ENCODE measurements at regions of chr5 and their contacts with region 1.

Region 1: DNA sequence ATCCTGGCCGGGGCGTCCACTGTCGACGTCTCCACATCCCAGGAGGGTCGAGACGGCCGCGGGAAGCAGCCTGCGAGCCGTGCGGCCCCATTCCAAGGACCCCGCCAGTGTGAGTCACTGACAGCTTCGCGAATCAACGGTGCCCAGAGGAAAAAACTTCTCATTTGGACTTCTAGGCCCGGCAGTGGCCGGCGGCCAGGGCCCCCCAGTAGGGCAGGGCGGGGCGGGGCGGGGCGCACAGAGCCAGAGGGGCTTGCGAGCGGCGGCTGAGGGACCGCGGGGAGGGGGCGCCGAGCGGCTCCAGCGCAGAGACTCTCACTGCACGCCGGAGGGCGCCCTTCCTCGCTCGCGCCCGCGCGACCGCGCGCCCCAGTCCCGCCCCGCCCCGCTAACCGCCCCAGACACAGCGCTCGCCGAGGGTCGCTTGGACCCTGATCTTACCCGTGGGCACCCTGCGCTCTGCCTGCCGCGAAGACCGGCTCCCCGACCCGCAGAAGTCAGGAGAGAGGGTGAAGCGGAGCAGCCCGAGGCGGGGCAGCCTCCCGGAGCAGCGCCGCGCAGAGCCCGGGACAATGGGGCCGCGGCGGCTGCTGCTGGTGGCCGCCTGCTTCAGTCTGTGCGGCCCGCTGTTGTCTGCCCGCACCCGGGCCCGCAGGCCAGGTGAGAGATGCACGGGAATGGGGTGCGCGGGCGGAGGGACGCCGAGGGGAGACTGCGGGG is at the start of gene F2R:
- DNase-seq: peak in 13 of 14 experiments; percentile 28 to 79 (median 47)
- ATAC-seq: peak; percentile 79
- H3K4me3 ChIP-seq: peak within 1 kb of the TSS; percentile 65
- H3K4me3 Mint-ChIP-seq: peak within 1 kb of the TSS; percentile 77
- H3K27ac ChIP-seq: no peak within 1 kb of the TSS
- H3K27ac Mint-ChIP-seq: no peak within 1 kb of the TSS
- H3K4me1 ChIP-seq: peaks cover 29% of the 10 kb centered on the region
- H3K4me1 Mint-ChIP-seq: peaks cover 20% of the 10 kb centered on the region
- H3K27me3 ChIP-seq: peaks cover 18% of the 10 kb centered on the region in 2 experiments
- H3K27me3 Mint-ChIP-seq: peaks cover 54% of the 10 kb centered on the region
- CTCF ChIP-seq: peak; percentile 40
- total RNA-seq, gene F2R: 1.9 to 2.7 TPM

Region 2: GRCh38 chr5:76736679-76737556 is 21.0 kb after region 1 on chr5:
- CTCF ChIA-PET with region 1: interaction called, 4 read pairs
- POLR2A ChIA-PET with region 1: interaction called, 4 read pairs
- intact Hi-C with region 1: loop called in 1 of 2 experiments (anchors 2 kb)
- DNase-seq: peak in 3 of 14 experiments; percentile 16 to 62 (median 23)
- ATAC-seq: no peak
- H3K4me3 ChIP-seq: no peak overlapping the region
- H3K4me3 Mint-ChIP-seq: no peak overlapping the region
- H3K27ac ChIP-seq: no peak overlapping the region
- H3K27ac Mint-ChIP-seq: no peak overlapping the region
- H3K4me1 ChIP-seq: peaks cover 47% of the 10 kb centered on the region
- H3K4me1 Mint-ChIP-seq: peaks cover 33% of the 10 kb centered on the region
- H3K27me3 ChIP-seq: no peaks in the 10 kb centered on the region
- H3K27me3 Mint-ChIP-seq: no peaks in the 10 kb centered on the region
- CTCF ChIP-seq: no peak

Region 3: GRCh38 chr5:77449277-77449676 is 733.4 kb after region 1 on chr5:
- CTCF ChIA-PET with region 1: no interaction called
- POLR2A ChIA-PET with region 1: no interaction called
- intact Hi-C with region 1: no loop called
- DNase-seq: no peak
- ATAC-seq: no peak
- H3K4me3 ChIP-seq: no peak overlapping the region
- H3K4me3 Mint-ChIP-seq: no peak overlapping the region
- H3K27ac ChIP-seq: no peak overlapping the region
- H3K27ac Mint-ChIP-seq: no peak overlapping the region
- H3K4me1 ChIP-seq: no peaks in the 10 kb centered on the region
- H3K4me1 Mint-ChIP-seq: no peaks in the 10 kb centered on the region
- H3K27me3 ChIP-seq: no peaks in the 10 kb centered on the region
- H3K27me3 Mint-ChIP-seq: no peaks in the 10 kb centered on the region
- CTCF ChIP-seq: no peak

Measured in CD4-positive, alpha-beta T cell (primary cell).